HepG2 (cell line): ENCODE measurements at regions of chr5 and their contacts with region 1.

Region 1: GRCh38 chr5:135973323-135974020 is 18.7 kb upstream of the LECT2 start:
- DNase-seq: peak; percentile 99
- ATAC-seq: peak; percentile 97
- H3K4me3 ChIP-seq: peak overlapping the region; percentile 7 to 49 (median 20); a peak in 5 of 6 replicates
- H3K27ac ChIP-seq: peak overlapping the region; percentile 98
- H3K4me1 ChIP-seq: peaks cover 55% of the 10 kb centered on the region
- H3K27me3 ChIP-seq: no peaks in the 10 kb centered on the region
- CTCF ChIP-seq: peak; percentile 32; the same call in 1 of the 2 replicates
- EP300 ChIP-seq: peak; percentile 96 to 99
- POLR2A ChIP-seq: peak; percentile 33 to 47; a peak in 2 of 4 replicates
- RAD21 ChIP-seq: peak; percentile 29; the same call in 1 of the 2 replicates

Region 2: GRCh38 chr5:135694012-135694411 is 279.5 kb before region 1 on chr5:
- CTCF ChIA-PET with region 1: no interaction called
- POLR2A ChIA-PET with region 1: no interaction called
- in situ Hi-C with region 1: no loop called
- intact Hi-C with region 1: no loop called
- DNase-seq: no peak
- ATAC-seq: no peak
- H3K4me3 ChIP-seq: no peak overlapping the region
- H3K27ac ChIP-seq: no peak overlapping the region
- H3K4me1 ChIP-seq: no peaks in the 10 kb centered on the region
- H3K27me3 ChIP-seq: peaks cover 0 to 32% of the 10 kb centered on the region in 2 experiments; a peak in 3 of 5 replicates
- CTCF ChIP-seq: no peak
- EP300 ChIP-seq: no peak
- POLR2A ChIP-seq: no peak
- RAD21 ChIP-seq: no peak

Region 3: DNA sequence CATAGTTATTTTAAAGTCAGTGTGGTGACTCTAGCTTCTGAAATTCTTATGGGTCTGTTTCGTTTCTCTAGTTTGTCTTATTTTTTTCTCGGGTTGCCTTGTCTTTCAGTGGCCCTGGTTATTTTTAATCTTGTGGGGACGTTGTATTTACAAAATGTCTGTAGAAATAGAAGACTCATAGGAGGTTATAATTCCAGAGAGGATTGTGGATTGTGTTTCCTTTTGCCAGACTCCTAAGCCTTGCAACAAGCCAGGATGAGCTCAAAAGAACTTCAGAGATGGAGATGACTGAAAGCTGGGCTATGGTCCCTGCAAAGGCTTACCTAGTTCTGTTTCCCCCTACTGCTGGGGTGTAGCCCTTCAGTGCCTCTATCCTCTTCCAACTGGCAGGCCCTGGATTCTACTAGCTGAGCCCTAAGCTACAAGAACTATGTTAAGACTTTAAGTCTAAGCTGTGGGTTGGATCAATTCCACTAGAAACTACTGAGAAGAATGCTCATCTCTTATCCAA is 13.5 kb after region 1 on chr5:
- CTCF ChIA-PET with region 1: no interaction called
- POLR2A ChIA-PET with region 1: interaction called, 37 read pairs
- in situ Hi-C with region 1: no loop called
- intact Hi-C with region 1: no loop called
- DNase-seq: no peak
- ATAC-seq: no peak
- H3K4me3 ChIP-seq: no peak overlapping the region
- H3K27ac ChIP-seq: no peak overlapping the region
- H3K4me1 ChIP-seq: peaks cover 10% of the 10 kb centered on the region
- H3K27me3 ChIP-seq: no peaks in the 10 kb centered on the region
- CTCF ChIP-seq: no peak
- EP300 ChIP-seq: no peak
- POLR2A ChIP-seq: no peak
- RAD21 ChIP-seq: no peak

Region 4: GRCh38 chr5:136028782-136029742 is 55.6 kb after region 1 on chr5 and contains the start of gene TGFBI:
- CTCF ChIA-PET with region 1: no interaction called
- POLR2A ChIA-PET with region 1: interaction called, 66 read pairs
- in situ Hi-C with region 1: no loop called
- intact Hi-C with region 1: no loop called
- DNase-seq: peak; percentile 61
- ATAC-seq: peak; percentile 95
- H3K4me3 ChIP-seq: peak within 1 kb of the TSS; percentile 80 to 85 (median 84)
- H3K27ac ChIP-seq: peak within 1 kb of the TSS; percentile 61
- H3K4me1 ChIP-seq: peaks cover 56% of the 10 kb centered on the region
- H3K27me3 ChIP-seq: no peaks in the 10 kb centered on the region; a peak in 2 of 5 replicates
- CTCF ChIP-seq: peak; percentile 70
- EP300 ChIP-seq: no peak
- POLR2A ChIP-seq: peak; percentile 82 to 94
- RAD21 ChIP-seq: peak; percentile 75
- total RNA-seq, gene TGFBI: 138 and 275 TPM in 2 replicates